Activated CD4-positive, alpha-beta T cell treated with anti-CD3 and anti-CD28 coated beads, Interleukin-2, amount 10 ng/mL, durations not matched to agents 7 days and 5 days (primary cell): ENCODE measurements at regions of chr1 and their contacts with region 1.

Region 1: DNA sequence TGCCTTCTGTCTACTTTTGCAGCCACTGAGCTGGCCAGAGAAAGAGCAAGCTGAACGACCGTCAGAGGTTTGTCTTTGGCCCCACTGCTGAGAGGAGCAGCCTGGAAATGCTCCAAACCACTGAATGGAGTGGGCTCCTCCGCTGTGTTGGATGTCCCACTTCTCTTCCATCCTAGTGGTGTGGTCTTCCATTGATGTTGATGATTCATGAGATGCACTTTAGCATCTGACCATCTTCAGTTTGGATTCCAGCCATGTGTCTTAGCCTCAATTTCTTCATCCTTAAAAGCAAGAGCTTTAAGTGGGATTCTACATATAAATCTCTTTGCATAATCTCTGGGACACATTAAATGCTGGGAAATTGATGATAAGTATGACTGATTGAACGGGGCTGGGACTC is 276.9 kb downstream of the SIPA1L2 start:
- DNase-seq: no peak
- H3K4me3 Mint-ChIP-seq: no peak overlapping the region
- H3K27ac Mint-ChIP-seq: no peak overlapping the region
- H3K4me1 Mint-ChIP-seq: no peaks in the 10 kb centered on the region
- H3K27me3 Mint-ChIP-seq: peaks cover 3% of the 10 kb centered on the region

Region 2: DNA sequence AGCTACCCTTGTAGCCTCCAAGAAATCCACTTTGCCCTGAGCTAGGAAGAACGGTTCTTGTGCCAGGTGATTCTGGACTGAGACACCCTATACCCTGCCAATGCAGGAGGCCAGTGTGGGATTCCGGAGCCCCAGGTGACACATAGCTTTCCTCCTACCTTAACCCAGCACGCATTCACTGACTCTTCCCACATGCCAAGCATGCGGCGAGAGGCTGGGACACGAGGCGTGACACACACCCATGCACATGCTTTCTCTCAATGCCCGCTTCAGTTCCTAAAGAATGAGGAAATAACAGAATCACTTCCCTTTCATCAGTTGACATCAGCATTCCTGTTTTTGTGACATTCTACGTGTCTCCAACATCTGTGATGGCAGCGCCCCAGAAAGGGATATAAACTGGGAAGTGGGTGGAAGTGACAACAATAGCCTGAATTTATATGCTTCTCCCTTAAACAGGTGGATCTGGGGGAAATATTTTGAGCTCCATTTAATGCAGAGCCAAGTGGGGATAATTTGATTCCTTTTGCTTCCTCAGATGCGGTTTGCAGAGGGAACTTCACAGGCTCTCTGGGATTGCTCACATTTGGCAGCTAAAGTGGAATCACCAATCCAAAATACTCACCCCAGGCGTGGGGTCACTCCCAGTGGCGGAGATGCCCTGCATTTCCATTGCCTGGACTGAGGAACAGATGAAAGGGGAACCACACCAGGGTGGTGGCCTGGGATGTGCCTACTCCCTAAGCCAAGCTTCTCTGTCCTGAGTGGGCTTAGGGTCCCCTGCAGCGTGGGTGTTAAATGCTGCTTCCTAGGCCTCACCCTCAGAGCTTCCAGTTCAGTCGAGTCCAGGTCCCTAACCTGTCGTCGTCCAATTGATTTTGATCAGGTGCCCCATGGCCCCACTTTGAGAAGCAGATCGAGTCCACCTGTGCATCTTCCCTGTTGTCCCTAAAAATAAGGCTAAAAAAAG is 168.2 kb before region 1 on chr1:
- CTCF ChIA-PET with region 1: no interaction called
- POLR2A ChIA-PET with region 1: no interaction called
- DNase-seq: no peak
- H3K4me3 Mint-ChIP-seq: no peak overlapping the region
- H3K27ac Mint-ChIP-seq: no peak overlapping the region
- H3K4me1 Mint-ChIP-seq: no peaks in the 10 kb centered on the region
- H3K27me3 Mint-ChIP-seq: no peaks in the 10 kb centered on the region

Region 3: DNA sequence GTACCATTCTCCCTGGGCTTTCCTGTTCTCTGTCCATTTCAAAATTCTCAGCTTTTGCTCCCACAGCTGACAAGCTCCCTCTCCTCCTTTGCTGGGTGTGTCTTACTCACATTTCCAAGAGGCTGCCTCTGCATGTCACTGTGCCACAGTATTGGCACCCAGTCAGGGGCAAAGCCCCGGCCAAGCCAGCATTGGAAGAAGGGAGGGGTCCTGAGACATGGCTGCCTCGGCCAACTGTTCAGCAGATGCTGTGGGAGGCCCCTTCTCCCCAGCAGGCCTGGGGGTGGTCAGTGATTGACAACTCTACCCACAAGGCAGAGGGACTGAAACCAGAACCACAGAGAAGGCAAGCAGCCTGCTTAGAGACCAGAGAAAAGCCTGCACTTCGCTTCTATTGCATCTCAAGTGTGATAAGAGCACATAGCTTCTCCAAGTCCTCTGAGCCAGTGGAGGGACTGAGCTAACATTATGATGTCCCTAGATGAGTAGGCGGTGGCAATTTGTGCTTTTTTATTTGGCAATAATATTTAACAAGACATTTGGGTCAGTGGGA is 17.2 kb before region 1 on chr1:
- CTCF ChIA-PET with region 1: no interaction called
- POLR2A ChIA-PET with region 1: no interaction called
- DNase-seq: no peak
- H3K4me3 Mint-ChIP-seq: no peak overlapping the region
- H3K27ac Mint-ChIP-seq: no peak overlapping the region
- H3K4me1 Mint-ChIP-seq: peaks cover 17% of the 10 kb centered on the region
- H3K27me3 Mint-ChIP-seq: peaks cover 38% of the 10 kb centered on the region

Region 4: GRCh38 chr1:234206651-234207284 is 1853.8 kb after region 1 on chr1:
- CTCF ChIA-PET with region 1: no interaction called
- POLR2A ChIA-PET with region 1: interaction called, 10 read pairs
- DNase-seq: no peak
- H3K4me3 Mint-ChIP-seq: no peak overlapping the region
- H3K27ac Mint-ChIP-seq: no peak overlapping the region
- H3K4me1 Mint-ChIP-seq: no peaks in the 10 kb centered on the region
- H3K27me3 Mint-ChIP-seq: peaks cover 18% of the 10 kb centered on the region